ENCODE measurements at regions of chr3 and their contacts with region 1.

Region 1: DNA sequence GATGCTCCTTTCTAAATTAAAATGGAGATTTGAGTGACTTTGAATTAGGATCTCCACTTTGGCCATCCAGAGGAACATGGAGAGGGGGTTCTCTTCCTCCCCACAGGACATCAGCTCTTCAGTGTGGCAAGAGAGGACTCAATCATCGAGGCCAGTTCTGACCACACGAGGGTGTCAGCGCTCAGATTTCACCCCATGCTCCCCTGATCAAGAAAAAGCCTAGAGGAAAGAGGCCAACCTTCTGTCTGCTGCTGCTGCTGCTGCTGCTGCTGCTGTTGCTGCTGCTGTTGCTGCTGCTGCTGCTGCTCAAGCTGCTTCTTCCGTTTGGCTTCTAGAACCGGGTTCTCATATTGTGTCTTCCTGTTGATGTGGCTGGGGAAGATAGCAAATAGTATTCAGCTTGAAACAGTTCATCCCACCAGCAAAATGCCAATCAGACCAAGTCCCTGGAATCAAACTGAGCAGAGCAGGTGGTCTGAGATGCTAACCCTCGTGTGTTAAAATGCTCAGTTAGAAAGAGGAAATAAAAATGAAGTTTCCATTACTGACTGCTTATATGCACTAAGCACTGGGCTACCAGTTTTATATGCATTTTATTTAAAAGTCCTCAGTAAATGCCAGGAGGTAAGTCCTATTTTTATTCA is 599.0 kb downstream of the MAGI1 start:
- DNase-seq: peak; percentile 46 to 59
- H3K4me3 ChIP-seq: no peak overlapping the region
- H3K27ac ChIP-seq: no peak overlapping the region
- H3K4me1 ChIP-seq: peaks cover 0 to 3% (median 1%) of the 10 kb centered on the region in 4 experiments; a peak in 3 of 7 replicates
- H3K27me3 ChIP-seq: no peaks in the 10 kb centered on the region
- CTCF ChIP-seq: peak; percentile 65 to 78 (median 69)
- EP300 ChIP-seq: no peak
- POLR2A ChIP-seq: no peak
- RAD21 ChIP-seq: peak; percentile 85 to 86

Region 2: GRCh38 chr3:65170390-65171042 is 269.2 kb before region 1 on chr3:
- CTCF ChIA-PET with region 1: no interaction called
- POLR2A ChIA-PET with region 1: no interaction called
- DNase-seq: no peak
- H3K4me3 ChIP-seq: no peak overlapping the region
- H3K27ac ChIP-seq: no peak overlapping the region
- H3K4me1 ChIP-seq: no peaks in the 10 kb centered on the region
- H3K27me3 ChIP-seq: no peaks in the 10 kb centered on the region
- CTCF ChIP-seq: peak in 2 of 3 experiments; percentile 32 to 56; a peak in 2 of 4 replicates
- EP300 ChIP-seq: no peak
- POLR2A ChIP-seq: no peak
- RAD21 ChIP-seq: peak; percentile 66 to 75

Region 3: DNA sequence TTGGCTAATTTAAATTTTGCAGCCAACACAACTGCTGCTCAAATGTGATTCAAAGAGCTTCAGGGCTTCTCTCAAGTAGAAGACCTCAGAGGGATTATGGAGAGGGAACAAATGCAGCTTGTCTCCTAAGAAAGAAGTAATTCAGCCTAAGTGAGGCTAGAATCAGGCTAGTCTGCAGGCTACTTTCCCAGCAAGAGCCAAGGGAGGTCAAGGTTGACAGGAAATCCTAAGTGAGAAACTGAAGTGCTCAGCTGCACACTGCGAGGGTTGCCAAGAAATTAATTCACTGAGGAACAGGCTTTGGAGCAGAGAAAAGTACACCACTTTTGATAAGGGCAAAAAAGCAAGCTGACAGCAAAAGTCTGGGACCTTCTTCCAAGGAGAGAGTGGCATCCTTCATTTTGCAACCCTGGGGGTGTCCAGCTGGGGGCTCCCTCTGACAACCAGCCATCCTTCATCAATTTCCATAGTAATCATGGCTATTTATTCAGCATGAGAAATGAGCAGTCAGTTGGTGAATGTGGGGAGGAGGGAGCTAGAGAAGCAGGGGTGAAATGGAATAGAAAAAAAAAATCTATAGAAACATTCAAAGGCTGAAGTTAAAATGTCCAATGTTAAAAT is 105.6 kb before region 1 on chr3:
- CTCF ChIA-PET with region 1: interaction called, 17 read pairs
- POLR2A ChIA-PET with region 1: no interaction called
- DNase-seq: peak in 1 of 2 experiments; percentile 63
- H3K4me3 ChIP-seq: no peak overlapping the region
- H3K27ac ChIP-seq: no peak overlapping the region
- H3K4me1 ChIP-seq: peaks cover 0 to 5% (median 0%) of the 10 kb centered on the region in 4 experiments; a peak in 1 of 7 replicates
- H3K27me3 ChIP-seq: no peaks in the 10 kb centered on the region
- CTCF ChIP-seq: peak; percentile 47 to 64 (median 59)
- EP300 ChIP-seq: no peak
- POLR2A ChIP-seq: no peak
- RAD21 ChIP-seq: peak; percentile 83 to 89

Region 4: GRCh38 chr3:65342084-65342683 is 97.6 kb before region 1 on chr3:
- CTCF ChIA-PET with region 1: interaction called, 16 read pairs
- POLR2A ChIA-PET with region 1: no interaction called
- DNase-seq: peak; percentile 59 to 89
- H3K4me3 ChIP-seq: no peak overlapping the region
- H3K27ac ChIP-seq: no peak overlapping the region
- H3K4me1 ChIP-seq: peaks cover 4 to 18% (median 7%) of the 10 kb centered on the region in 4 experiments; a peak in 6 of 7 replicates
- H3K27me3 ChIP-seq: no peaks in the 10 kb centered on the region
- CTCF ChIP-seq: peak; percentile 82 to 97 (median 96)
- EP300 ChIP-seq: no peak
- POLR2A ChIP-seq: no peak
- RAD21 ChIP-seq: peak; percentile 74 to 84

Region 5: DNA sequence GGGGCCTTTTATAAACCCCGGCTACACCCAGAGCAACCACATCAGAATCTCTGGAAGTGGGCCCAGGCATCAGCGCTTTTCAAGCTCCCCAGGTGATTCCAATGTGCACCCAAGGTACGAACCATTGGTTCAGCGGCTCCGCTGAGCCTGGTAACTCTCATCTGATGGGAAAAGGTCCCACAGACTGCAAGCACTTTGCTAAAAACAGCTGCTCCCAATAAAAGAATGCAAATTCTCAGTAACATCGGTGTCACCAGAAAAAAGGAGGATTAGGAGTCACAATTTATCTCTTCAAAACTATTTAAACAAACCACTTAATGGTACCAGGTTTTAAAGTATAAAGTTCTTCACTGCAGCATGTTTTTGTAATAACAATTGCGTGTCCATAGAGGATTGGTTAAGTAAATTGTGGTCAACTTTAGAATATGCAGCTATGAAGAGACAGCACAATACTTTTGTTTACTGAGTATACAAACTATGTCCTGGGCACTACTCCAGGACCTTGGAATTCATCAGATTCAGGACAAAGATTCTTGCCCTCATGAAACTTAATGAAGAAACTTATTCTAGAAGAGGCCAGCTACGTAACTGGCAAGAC is 91.3 kb before region 1 on chr3:
- CTCF ChIA-PET with region 1: interaction called, 16 read pairs
- POLR2A ChIA-PET with region 1: no interaction called
- DNase-seq: no peak
- H3K4me3 ChIP-seq: no peak overlapping the region
- H3K27ac ChIP-seq: no peak overlapping the region
- H3K4me1 ChIP-seq: peaks cover 4 to 15% (median 7%) of the 10 kb centered on the region in 4 experiments; a peak in 6 of 7 replicates
- H3K27me3 ChIP-seq: no peaks in the 10 kb centered on the region
- CTCF ChIP-seq: no peak
- EP300 ChIP-seq: no peak
- POLR2A ChIP-seq: no peak
- RAD21 ChIP-seq: no peak

Region 6: GRCh38 chr3:65425880-65426279 is 13.9 kb before region 1 on chr3:
- CTCF ChIA-PET with region 1: interaction called, 15 read pairs
- POLR2A ChIA-PET with region 1: interaction called, 3 read pairs
- DNase-seq: no peak
- H3K4me3 ChIP-seq: no peak overlapping the region
- H3K27ac ChIP-seq: no peak overlapping the region
- H3K4me1 ChIP-seq: no peaks in the 10 kb centered on the region
- H3K27me3 ChIP-seq: no peaks in the 10 kb centered on the region
- CTCF ChIP-seq: peak in 2 of 3 experiments; percentile 30 to 52; a peak in 2 of 4 replicates
- EP300 ChIP-seq: no peak
- POLR2A ChIP-seq: no peak
- RAD21 ChIP-seq: peak; percentile 42 to 55; a peak in 3 of 4 replicates

Region 7: GRCh38 chr3:65497846-65498245 is 58.1 kb after region 1 on chr3:
- CTCF ChIA-PET with region 1: no interaction called
- POLR2A ChIA-PET with region 1: no interaction called
- DNase-seq: no peak
- H3K4me3 ChIP-seq: no peak overlapping the region
- H3K27ac ChIP-seq: no peak overlapping the region
- H3K4me1 ChIP-seq: peaks cover 0 to 12% (median 3%) of the 10 kb centered on the region in 4 experiments; a peak in 2 of 7 replicates
- H3K27me3 ChIP-seq: no peaks in the 10 kb centered on the region
- CTCF ChIP-seq: no peak
- EP300 ChIP-seq: no peak
- POLR2A ChIP-seq: no peak
- RAD21 ChIP-seq: no peak

Region 8: DNA sequence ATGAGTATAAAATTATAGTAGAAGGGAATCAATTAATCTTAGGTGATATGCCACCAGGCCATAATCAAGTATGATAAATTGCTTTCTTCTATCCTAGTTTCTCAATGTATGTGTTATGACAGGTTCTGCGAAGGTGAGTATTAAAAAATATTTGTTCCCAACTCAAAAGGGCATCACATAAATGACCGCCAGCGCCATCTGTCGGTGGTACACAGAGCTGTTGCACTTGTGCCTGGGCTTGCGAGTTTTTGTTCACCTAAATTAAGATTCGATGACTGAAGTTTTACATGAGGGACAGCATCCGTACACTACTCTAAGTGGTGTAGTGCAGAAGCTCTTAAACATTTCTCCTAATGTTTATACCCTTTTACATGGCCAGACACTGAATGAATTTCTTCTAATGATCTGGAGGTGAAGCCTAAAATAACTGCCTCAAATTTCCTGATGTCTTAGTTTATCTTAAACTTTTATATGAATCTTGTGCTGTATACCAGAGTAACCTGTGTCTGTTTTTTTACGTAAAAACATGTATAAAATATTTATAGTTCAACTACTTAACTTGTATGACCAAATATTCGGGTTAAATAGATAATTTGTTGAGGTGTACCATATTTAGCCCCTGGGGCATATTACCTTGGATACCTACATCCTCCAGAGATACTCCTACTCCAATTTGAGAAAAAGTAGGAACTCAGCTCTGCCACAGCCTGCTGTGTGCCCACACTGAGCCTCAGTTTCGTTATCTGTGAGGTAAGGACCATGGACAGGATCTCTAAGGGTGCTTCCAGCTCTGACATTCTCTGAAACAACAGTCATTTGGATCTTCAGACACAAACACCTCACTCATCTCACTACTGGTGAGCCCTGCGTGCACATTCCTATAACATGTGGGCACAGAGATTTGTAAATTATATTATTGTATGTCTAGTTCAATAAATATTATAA is 233.4 kb after region 1 on chr3:
- CTCF ChIA-PET with region 1: interaction called, 10 read pairs
- POLR2A ChIA-PET with region 1: no interaction called
- DNase-seq: peak; percentile 29 to 78
- H3K4me3 ChIP-seq: no peak overlapping the region
- H3K27ac ChIP-seq: no peak overlapping the region
- H3K4me1 ChIP-seq: peaks cover 0 to 5% (median 1%) of the 10 kb centered on the region in 4 experiments; a peak in 2 of 7 replicates
- H3K27me3 ChIP-seq: no peaks in the 10 kb centered on the region
- CTCF ChIP-seq: peak; percentile 70 to 90 (median 77)
- EP300 ChIP-seq: no peak
- POLR2A ChIP-seq: no peak
- RAD21 ChIP-seq: peak; percentile 72 to 79

Region 9: GRCh38 chr3:65678516-65678915 is 238.8 kb after region 1 on chr3:
- CTCF ChIA-PET with region 1: interaction called, 10 read pairs
- POLR2A ChIA-PET with region 1: no interaction called
- DNase-seq: no peak
- H3K4me3 ChIP-seq: no peak overlapping the region
- H3K27ac ChIP-seq: no peak overlapping the region
- H3K4me1 ChIP-seq: peaks cover 0 to under 1% (median 0%) of the 10 kb centered on the region in 4 experiments; a peak in 2 of 7 replicates
- H3K27me3 ChIP-seq: no peaks in the 10 kb centered on the region
- CTCF ChIP-seq: no peak
- EP300 ChIP-seq: no peak
- POLR2A ChIP-seq: no peak
- RAD21 ChIP-seq: no peak